ENCODE measurements at regions of chr17 and their contacts with region 1.

Region 1: DNA sequence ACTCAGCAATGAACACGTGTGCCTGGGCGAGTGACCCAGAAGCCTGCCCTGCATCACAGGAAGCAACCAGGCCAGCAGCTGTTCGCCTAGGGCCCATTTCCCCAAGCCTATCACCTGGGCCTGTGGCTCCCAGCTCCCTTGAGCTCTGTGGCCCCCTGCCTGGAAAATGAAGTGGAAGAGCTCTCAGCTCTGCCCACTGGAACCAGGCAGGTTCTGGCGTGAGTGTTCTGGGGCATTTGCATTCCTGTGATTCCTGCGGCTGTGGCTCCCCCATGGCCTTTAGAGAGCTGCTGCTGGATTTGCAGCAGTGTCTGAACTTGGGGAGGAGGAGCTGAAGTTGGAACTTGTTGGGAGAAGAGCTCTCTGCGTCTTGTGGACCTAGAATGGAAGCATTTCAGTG is 22.8 kb downstream of the PGS1 start:
- DNase-seq: no peak
- H3K4me3 ChIP-seq: no peak overlapping the region
- H3K27me3 ChIP-seq: no peaks in the 10 kb centered on the region
- CTCF ChIP-seq: no peak

Region 2: DNA sequence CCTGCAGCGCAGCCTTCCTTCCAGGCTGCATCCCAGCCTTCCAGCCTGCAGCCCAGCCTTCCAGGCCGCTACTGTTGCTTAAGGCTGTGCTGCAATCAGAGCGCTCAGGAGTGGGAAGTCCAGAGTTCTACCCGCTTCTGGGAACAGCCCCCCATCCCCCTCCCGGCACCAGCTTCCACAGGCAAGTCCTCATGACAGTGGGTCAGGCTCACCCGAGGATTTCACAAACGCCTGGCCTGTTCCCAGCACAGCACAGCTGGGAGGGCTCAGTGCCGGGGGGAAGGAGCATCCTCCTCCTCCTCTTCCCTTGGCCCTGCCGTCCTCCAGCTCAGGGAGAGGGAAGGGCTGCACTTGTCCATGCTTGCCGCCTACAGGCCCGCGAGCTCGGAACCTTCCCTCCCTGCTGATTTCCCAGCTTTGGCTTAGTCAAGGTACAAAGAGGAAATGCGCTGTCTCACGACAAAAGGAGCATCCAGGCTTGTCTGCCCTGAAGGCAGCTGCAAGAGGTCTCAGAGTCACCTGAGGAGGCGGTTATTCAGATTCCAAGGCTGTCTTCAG is 49.7 kb before region 1 on chr17:
- CTCF ChIA-PET with region 1: no interaction called
- POLR2A ChIA-PET with region 1: no interaction called
- DNase-seq: peak; percentile 96
- H3K4me3 ChIP-seq: no peak overlapping the region
- H3K27me3 ChIP-seq: no peaks in the 10 kb centered on the region
- CTCF ChIP-seq: peak; percentile 47; the same call in 1 of the 2 replicates

Region 3: GRCh38 chr17:78412403-78412802 is 11.2 kb after region 1 on chr17:
- CTCF ChIA-PET with region 1: interaction called, 6 read pairs
- POLR2A ChIA-PET with region 1: interaction called, 12 read pairs
- DNase-seq: no peak
- H3K4me3 ChIP-seq: no peak overlapping the region
- H3K27me3 ChIP-seq: no peaks in the 10 kb centered on the region
- CTCF ChIP-seq: peak; percentile 49